ENCODE measurements at regions of chr12 and their contacts with region 1.

Region 1: DNA sequence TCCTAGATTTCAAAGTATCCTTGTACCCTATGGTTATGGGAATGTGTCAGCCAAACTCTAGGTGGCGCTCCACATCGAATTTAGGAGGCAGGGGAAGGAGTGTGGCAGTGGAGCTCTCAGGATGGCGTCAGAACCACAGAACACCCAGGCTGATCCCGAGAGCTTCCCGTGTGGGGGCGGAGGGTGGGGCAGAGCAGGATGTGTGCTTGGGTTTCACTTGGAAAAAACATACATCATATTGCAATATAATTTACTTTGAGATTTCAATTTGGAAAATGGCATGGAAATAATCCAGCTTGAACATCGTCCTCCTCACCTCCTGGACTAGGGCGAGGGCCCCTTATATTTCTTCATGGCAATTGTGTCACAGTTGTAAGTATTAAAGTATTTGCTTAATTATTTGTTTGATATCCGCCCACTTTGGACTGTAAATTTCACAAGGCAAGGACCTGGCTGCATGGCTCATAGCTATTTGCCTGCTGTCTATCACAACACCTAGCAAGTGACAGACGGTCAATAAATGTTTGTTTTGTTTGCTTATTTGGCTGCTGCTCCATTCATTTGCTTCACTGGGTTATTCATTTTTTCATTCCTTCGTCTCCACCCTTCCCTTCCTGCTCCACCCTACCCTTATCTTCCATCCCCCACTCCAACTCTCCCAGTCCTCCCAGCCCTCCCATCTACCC is 221.5 kb upstream of the HMGA2 start:
- DNase-seq: peak; percentile 97
- H3K4me3 Mint-ChIP-seq: peak overlapping the region; percentile 81
- H3K27ac Mint-ChIP-seq: peak overlapping the region; percentile 42
- H3K4me1 Mint-ChIP-seq: peaks cover 46% of the 10 kb centered on the region
- H3K27me3 Mint-ChIP-seq: no peaks in the 10 kb centered on the region
- CTCF ChIP-seq: peak; percentile 67

Region 2: DNA sequence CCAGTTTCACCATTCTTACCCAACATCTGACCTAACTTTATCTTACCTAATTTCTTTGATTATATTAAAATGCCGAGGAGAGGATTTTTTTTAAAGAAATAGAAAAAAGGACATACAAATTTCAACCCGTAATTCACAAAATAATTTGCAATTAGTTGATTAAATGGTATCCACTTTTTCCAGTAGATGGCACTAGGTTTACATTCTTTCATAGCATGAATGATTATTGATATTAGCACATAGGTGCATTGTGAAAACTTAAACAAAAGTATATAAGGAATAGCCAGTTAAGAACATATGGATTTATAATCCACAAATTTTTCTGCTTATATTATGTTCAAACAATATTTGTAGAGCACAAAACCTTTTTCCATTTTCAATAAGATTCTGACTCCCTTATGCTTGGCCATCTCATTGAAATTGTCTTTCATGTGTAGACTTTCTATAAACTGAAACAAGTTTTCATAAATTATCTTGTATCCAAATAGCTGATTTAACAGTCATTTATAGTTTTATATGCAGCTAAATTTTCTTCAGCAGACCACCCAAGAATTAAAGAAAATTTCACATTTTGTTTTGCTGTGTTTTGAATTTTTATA is 288.9 kb before region 1 on chr12:
- CTCF ChIA-PET with region 1: interaction called, 3 read pairs
- POLR2A ChIA-PET with region 1: no interaction called
- intact Hi-C with region 1: loop called (anchors 2 kb)
- DNase-seq: peak; percentile 52
- H3K4me3 Mint-ChIP-seq: no peak overlapping the region
- H3K27ac Mint-ChIP-seq: no peak overlapping the region
- H3K4me1 Mint-ChIP-seq: peaks cover 12% of the 10 kb centered on the region
- H3K27me3 Mint-ChIP-seq: no peaks in the 10 kb centered on the region
- CTCF ChIP-seq: peak; percentile 66

Region 3: DNA sequence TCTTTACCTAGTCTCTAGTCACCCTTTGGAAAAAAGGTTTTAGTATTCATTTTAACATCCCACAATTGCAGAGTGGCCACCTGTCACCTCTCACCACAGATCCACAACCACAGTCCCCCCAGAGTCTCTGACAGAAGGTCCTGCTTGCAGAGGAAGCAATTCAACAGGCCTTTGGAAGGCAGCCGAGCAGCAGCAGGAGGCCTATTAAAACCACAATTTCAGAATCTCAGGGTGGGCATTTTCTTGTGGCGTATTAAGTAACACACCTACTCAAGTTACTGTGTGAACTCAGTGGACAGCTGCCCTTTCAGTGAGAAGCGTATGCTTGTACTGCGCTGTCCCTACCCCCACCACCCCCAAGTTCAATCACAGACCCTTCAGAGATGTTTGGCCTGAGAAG is 12.4 kb before region 1 on chr12:
- CTCF ChIA-PET with region 1: interaction called, 11 read pairs
- POLR2A ChIA-PET with region 1: interaction called, 5 read pairs
- intact Hi-C with region 1: no loop called
- DNase-seq: no peak
- H3K4me3 Mint-ChIP-seq: no peak overlapping the region
- H3K27ac Mint-ChIP-seq: no peak overlapping the region
- H3K4me1 Mint-ChIP-seq: peaks cover 30% of the 10 kb centered on the region
- H3K27me3 Mint-ChIP-seq: no peaks in the 10 kb centered on the region
- CTCF ChIP-seq: no peak

Region 4: GRCh38 chr12:65656904-65657351 is 54.2 kb after region 1 on chr12:
- CTCF ChIA-PET with region 1: interaction called, 13 read pairs
- POLR2A ChIA-PET with region 1: interaction called, 10 read pairs
- intact Hi-C with region 1: loop called (anchors 1 kb)
- DNase-seq: peak; percentile 96
- H3K4me3 Mint-ChIP-seq: no peak overlapping the region
- H3K27ac Mint-ChIP-seq: peak overlapping the region; percentile 94
- H3K4me1 Mint-ChIP-seq: peaks cover 61% of the 10 kb centered on the region
- H3K27me3 Mint-ChIP-seq: no peaks in the 10 kb centered on the region
- CTCF ChIP-seq: no peak

Region 5: DNA sequence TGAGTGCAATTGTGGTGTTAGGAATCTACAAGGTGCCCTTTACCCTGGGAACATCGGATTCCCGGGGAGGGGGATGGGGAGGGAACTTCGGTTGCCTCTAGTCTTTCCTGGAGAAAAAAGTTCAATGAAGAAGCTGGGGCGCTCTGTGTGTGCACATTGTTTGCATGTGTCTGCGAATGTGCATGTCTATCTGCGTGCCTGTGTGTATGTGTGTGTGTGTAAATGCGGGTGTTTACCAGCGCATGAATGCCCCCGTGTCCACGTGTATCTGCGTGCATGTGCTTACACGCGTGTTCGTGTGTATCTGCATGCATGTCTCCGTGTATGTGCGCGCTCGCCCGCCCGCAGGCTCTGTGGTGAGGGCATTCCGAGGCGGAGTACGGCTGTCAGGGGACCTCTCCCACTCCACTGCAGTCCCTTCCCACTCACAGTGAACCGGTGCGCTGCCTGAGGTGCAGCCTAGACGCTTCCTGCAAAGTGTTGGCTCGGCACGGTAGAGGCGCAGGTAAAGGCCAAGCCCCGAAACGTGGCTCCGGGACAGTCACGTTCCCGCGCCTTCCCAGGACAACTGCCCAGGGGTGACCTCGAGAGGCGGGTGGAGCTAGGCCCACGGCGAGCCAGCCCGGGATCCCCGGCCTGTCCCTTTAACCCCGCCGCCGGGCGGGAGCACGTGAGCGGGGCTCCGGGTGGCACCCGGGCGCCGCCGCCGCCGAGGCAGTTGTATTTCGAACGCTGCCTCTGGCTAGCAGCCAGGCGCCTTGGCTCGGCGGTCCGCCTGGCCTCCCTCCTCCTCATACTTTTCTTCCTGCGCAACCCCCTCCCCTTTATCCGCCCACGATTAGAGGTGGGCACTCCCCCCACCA is 221.0 kb after region 1 on chr12:
- CTCF ChIA-PET with region 1: interaction called, 15 read pairs
- POLR2A ChIA-PET with region 1: interaction called, 29 read pairs
- intact Hi-C with region 1: loop called (anchors 1 kb)
- DNase-seq: peak; percentile 85
- H3K4me3 Mint-ChIP-seq: peak overlapping the region; percentile 94
- H3K27ac Mint-ChIP-seq: peak overlapping the region; percentile 90
- H3K4me1 Mint-ChIP-seq: peaks cover 35% of the 10 kb centered on the region
- H3K27me3 Mint-ChIP-seq: no peaks in the 10 kb centered on the region
- CTCF ChIP-seq: no peak

Region 6: GRCh38 chr12:65986047-65986446 is 383.3 kb after region 1 on chr12:
- CTCF ChIA-PET with region 1: interaction called, 6 read pairs
- POLR2A ChIA-PET with region 1: no interaction called
- intact Hi-C with region 1: loop called (anchors 1 kb)
- DNase-seq: no peak
- H3K4me3 Mint-ChIP-seq: no peak overlapping the region
- H3K27ac Mint-ChIP-seq: no peak overlapping the region
- H3K4me1 Mint-ChIP-seq: peaks cover 5% of the 10 kb centered on the region
- H3K27me3 Mint-ChIP-seq: no peaks in the 10 kb centered on the region
- CTCF ChIP-seq: no peak

Region 7: GRCh38 chr12:66107451-66107915 is 504.7 kb after region 1 on chr12:
- CTCF ChIA-PET with region 1: interaction called, 3 read pairs
- POLR2A ChIA-PET with region 1: no interaction called
- intact Hi-C with region 1: loop called (anchors 1 kb)
- DNase-seq: peak; percentile 98
- H3K4me3 Mint-ChIP-seq: no peak overlapping the region
- H3K27ac Mint-ChIP-seq: no peak overlapping the region
- H3K4me1 Mint-ChIP-seq: peaks cover 16% of the 10 kb centered on the region
- H3K27me3 Mint-ChIP-seq: no peaks in the 10 kb centered on the region
- CTCF ChIP-seq: peak; percentile 62

Measured in MCF 10A (cell line).